Naive thymus-derived CD4-positive, alpha-beta T cell (primary cell): ENCODE measurements at regions of chr9 and their contacts with region 1.

Region 1: DNA sequence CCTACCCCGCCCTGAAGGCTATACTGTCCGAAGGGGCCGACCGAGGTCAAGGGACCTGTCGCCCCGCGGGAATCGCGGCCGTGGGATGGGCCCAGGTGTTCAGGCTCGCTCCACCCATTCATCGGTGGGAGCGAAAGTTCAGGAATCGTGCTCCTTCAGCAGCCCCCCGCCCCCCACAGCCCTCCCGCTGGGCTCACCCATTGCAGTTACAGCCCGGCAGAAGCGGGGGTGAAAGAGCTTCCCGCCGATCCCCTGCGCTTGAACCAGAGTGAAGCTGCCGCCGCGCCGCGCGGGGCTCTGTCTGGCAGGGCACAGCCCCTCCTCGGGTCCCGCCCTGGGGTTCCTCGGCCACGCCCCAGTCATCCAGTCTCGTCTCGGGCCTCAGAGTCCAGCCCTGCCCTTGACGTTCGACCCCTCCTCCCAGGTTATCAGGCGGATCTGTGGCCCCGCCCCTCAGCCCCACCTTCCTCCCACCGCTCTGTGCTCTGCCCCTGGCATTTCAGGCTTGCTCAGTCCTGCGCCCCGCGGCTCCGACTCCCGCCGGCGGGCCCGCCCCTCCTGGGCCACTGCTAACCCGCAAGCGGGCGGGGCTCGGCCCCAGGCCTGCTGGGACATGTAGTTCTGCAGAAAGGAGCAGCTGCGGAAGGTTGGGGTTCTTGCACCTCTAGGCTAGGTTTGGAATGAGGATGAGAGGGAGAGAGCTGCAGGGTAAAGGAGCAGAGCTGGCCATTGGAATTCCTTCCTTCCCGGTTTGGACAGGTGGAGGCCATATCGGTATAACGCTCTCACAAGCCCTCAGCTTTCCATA is at the start of gene MYORG:
- DNase-seq: peak; percentile 85 to 96 (median 93)
- ATAC-seq: peak; percentile 86
- H3K4me3 ChIP-seq: peak within 1 kb of the TSS; percentile 82
- H3K4me3 Mint-ChIP-seq: peak within 1 kb of the TSS; percentile 78 to 94 (median 91)
- H3K27ac ChIP-seq: peak within 1 kb of the TSS; percentile 57
- H3K27ac Mint-ChIP-seq: peak within 1 kb of the TSS; percentile 52 to 92 (median 81)
- H3K4me1 ChIP-seq: peaks cover 16 to 22% of the 10 kb centered on the region in 2 donors
- H3K4me1 Mint-ChIP-seq: peaks cover 27 to 49% (median 45%) of the 10 kb centered on the region in 7 donors
- H3K27me3 ChIP-seq: no peaks in the 10 kb centered on the region
- H3K27me3 Mint-ChIP-seq: peaks cover 0 to 5% (median 0%) of the 10 kb centered on the region in 5 donors
- total RNA-seq, gene MYORG: 0.60 to 1.9 (median 0.78) TPM

Region 2: DNA sequence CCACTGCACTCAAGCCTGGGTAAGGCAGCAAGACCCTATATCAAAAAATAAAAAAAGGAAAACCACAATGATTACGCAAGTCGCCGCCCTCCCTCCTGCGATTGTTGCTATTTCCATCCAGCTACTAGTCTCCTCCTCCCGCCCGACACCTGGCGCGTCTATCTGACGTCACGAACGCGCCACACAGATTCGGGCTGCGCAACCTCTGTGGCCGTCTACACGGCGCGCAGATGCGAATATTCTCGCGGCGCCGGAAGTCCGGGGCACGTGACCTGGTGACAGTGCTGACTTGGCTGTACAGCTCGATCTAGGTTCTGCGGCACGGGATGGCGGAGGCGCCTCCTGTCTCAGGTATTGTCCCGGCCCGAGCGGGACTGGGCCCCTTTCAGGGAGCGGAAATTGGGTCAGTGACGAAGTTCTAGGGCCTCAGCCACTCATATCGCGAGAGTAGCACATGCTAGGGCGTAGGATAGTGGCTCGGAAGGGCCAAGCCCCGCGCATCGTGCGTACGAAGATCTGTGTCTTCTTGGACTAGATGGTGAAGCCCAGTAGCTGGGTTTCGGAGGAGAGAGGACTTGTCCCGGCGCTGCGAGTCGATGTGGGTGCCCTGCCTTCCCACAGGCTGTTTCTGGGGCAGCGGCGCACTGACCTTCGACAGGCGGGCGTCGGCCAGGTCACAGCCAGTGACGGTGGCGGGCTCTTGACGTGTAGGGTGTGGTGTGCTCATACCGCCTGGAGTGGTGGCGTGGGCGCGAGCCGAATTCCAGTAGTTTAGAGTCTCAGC is 1086.4 kb before region 1 on chr9 and contains the start of gene NFX1:
- CTCF ChIA-PET with region 1: no interaction called
- POLR2A ChIA-PET with region 1: no interaction called
- intact Hi-C with region 1: loop called in 1 of 2 experiments (anchors 10 kb)
- DNase-seq: peak; percentile 94 to 100 (median 99)
- ATAC-seq: peak; percentile 89
- H3K4me3 ChIP-seq: peak within 1 kb of the TSS; percentile 76
- H3K4me3 Mint-ChIP-seq: peak within 1 kb of the TSS; percentile 83 to 99 (median 94)
- H3K27ac ChIP-seq: peak within 1 kb of the TSS; percentile 93
- H3K27ac Mint-ChIP-seq: peak within 1 kb of the TSS; percentile 96 to 100 (median 99)
- H3K4me1 ChIP-seq: peaks cover 11 to 49% of the 10 kb centered on the region in 2 donors
- H3K4me1 Mint-ChIP-seq: peaks cover 36 to 72% (median 58%) of the 10 kb centered on the region in 7 donors
- H3K27me3 ChIP-seq: no peaks in the 10 kb centered on the region
- H3K27me3 Mint-ChIP-seq: peaks cover 0 to 4% (median 0%) of the 10 kb centered on the region in 5 donors
- total RNA-seq, gene NFX1: 39.8 to 65.4 (median 43.6) TPM

Region 3: DNA sequence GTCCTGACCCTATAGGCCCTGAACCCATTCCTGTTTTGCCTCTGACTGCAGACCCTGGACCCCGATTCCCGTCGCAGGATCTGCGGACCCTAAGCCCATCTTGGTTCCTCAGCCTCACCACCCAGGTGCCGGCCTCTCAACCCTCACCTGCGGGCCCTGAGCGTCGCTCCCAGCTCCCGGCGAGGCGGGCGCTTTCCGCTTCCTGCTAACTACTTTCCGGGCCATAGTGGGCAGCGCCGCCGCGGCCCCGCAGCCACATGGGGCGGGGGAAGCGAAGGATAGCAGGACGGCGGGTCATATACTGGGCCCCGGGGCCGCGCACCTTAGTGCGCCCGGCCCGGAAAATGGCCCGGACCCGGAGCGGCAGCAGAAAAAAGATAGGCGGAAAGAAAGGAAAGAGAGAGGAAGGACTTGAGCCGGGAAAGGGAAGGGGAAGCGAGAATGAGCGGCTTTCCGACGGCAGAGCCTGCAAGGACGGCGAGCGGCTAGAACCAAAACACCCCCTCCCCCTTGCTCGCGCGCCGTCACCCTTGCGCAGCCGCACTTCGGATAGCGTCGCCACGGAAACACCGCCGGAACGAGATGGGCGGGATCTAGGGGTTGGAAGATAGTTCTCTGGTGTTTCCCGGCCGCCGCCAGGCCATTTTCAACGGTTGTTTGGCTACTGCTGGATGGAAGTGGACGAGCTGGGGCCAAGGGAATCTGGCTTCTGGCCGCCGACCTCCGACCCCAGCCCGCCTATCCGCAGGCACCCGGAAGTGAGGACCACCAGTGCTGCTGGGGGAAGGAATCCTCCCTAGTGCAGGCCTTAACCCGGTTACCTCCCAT is 250.4 kb before region 1 on chr9 and contains the start of gene DCAF12:
- CTCF ChIA-PET with region 1: no interaction called
- POLR2A ChIA-PET with region 1: no interaction called
- intact Hi-C with region 1: loop called (anchors 1 kb)
- DNase-seq: peak; percentile 84 to 92 (median 89)
- ATAC-seq: peak; percentile 96
- H3K4me3 ChIP-seq: peak within 1 kb of the TSS; percentile 92
- H3K4me3 Mint-ChIP-seq: peak within 1 kb of the TSS; percentile 92 to 99 (median 98)
- H3K27ac ChIP-seq: peak within 1 kb of the TSS; percentile 93
- H3K27ac Mint-ChIP-seq: peak within 1 kb of the TSS; percentile 94 to 99 (median 98)
- H3K4me1 ChIP-seq: peaks cover 24 to 34% of the 10 kb centered on the region in 2 donors
- H3K4me1 Mint-ChIP-seq: peaks cover 39 to 56% (median 44%) of the 10 kb centered on the region in 7 donors
- H3K27me3 ChIP-seq: no peaks in the 10 kb centered on the region
- H3K27me3 Mint-ChIP-seq: peaks cover 0 to 2% (median 0%) of the 10 kb centered on the region in 5 donors
- total RNA-seq, gene DCAF12: 10.8 to 40.4 (median 28.5) TPM

Region 4: DNA sequence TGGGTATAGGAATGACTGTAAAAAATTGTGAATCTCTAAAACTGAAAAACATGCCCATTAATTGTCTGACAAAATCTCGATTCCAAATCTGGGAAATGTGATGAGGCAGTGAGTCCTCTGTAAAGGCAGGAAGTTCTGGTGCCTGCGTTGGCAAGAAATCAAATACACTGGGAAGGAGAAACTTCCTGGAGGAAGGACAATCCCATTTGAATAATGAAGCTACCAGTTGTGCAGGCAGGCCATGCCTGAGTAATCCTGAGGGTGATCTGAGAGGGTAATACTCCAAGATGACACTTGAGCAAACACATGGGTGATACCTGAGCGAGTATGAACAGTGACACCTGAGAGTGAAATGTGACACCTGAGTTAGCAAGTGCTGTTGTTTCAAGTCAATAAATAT is 97.4 kb before region 1 on chr9:
- CTCF ChIA-PET with region 1: no interaction called
- POLR2A ChIA-PET with region 1: no interaction called
- intact Hi-C with region 1: no loop called
- DNase-seq: no peak
- ATAC-seq: no peak
- H3K4me3 ChIP-seq: no peak overlapping the region
- H3K4me3 Mint-ChIP-seq: no peak overlapping the region
- H3K27ac ChIP-seq: no peak overlapping the region
- H3K27ac Mint-ChIP-seq: no peak overlapping the region
- H3K4me1 ChIP-seq: no peaks in the 10 kb centered on the region
- H3K4me1 Mint-ChIP-seq: peaks cover 0 to 8% (median 7%) of the 10 kb centered on the region in 7 donors
- H3K27me3 ChIP-seq: no peaks in the 10 kb centered on the region
- H3K27me3 Mint-ChIP-seq: no peaks in the 10 kb centered on the region

Region 5: GRCh38 chr9:34363619-34364351 is 13.0 kb before region 1 on chr9:
- CTCF ChIA-PET with region 1: interaction called, 10 read pairs
- POLR2A ChIA-PET with region 1: interaction called, 3 read pairs
- intact Hi-C with region 1: no loop called
- DNase-seq: peak in 7 of 9 donors; percentile 23 to 65 (median 53)
- ATAC-seq: peak; percentile 85
- H3K4me3 ChIP-seq: no peak overlapping the region
- H3K4me3 Mint-ChIP-seq: peak overlapping the region; percentile 26 to 79 (median 53)
- H3K27ac ChIP-seq: peak overlapping the region; percentile 22
- H3K27ac Mint-ChIP-seq: peak overlapping the region; percentile 24 to 87 (median 73)
- H3K4me1 ChIP-seq: peaks cover 0 to 21% of the 10 kb centered on the region in 2 donors
- H3K4me1 Mint-ChIP-seq: peaks cover 14 to 29% (median 20%) of the 10 kb centered on the region in 7 donors
- H3K27me3 ChIP-seq: no peaks in the 10 kb centered on the region
- H3K27me3 Mint-ChIP-seq: no peaks in the 10 kb centered on the region

Region 6: GRCh38 chr9:34522971-34523797 is 146.4 kb after region 1 on chr9 and contains the start of gene ENHO:
- CTCF ChIA-PET with region 1: no interaction called
- POLR2A ChIA-PET with region 1: no interaction called
- intact Hi-C with region 1: loop called in 1 of 2 experiments (anchors 1 kb)
- DNase-seq: peak; percentile 77 to 97 (median 91)
- ATAC-seq: peak; percentile 97
- H3K4me3 ChIP-seq: peak within 1 kb of the TSS; percentile 66
- H3K4me3 Mint-ChIP-seq: peak within 1 kb of the TSS; percentile 70 to 83 (median 78)
- H3K27ac ChIP-seq: peak within 1 kb of the TSS; percentile 61
- H3K27ac Mint-ChIP-seq: peak within 1 kb of the TSS in 7 of 9 donors; percentile 18 to 79 (median 61)
- H3K4me1 ChIP-seq: peaks cover 7 to 10% of the 10 kb centered on the region in 2 donors
- H3K4me1 Mint-ChIP-seq: peaks cover 5 to 19% (median 10%) of the 10 kb centered on the region in 7 donors
- H3K27me3 ChIP-seq: no peaks in the 10 kb centered on the region
- H3K27me3 Mint-ChIP-seq: peaks cover 0 to 55% (median 8%) of the 10 kb centered on the region in 5 donors
- total RNA-seq, gene ENHO: 0.56 to 1.9 TPM in 2 of 5 experiments, not detected in the others

Region 7: GRCh38 chr9:34717996-34718614 is 341.3 kb after region 1 on chr9:
- CTCF ChIA-PET with region 1: no interaction called
- POLR2A ChIA-PET with region 1: no interaction called
- intact Hi-C with region 1: no loop called
- DNase-seq: no peak
- ATAC-seq: no peak
- H3K4me3 ChIP-seq: no peak overlapping the region
- H3K4me3 Mint-ChIP-seq: no peak overlapping the region
- H3K27ac ChIP-seq: no peak overlapping the region
- H3K27ac Mint-ChIP-seq: no peak overlapping the region
- H3K4me1 ChIP-seq: no peaks in the 10 kb centered on the region
- H3K4me1 Mint-ChIP-seq: no peaks in the 10 kb centered on the region
- H3K27me3 ChIP-seq: no peaks in the 10 kb centered on the region
- H3K27me3 Mint-ChIP-seq: peaks cover 0 to 15% (median 9%) of the 10 kb centered on the region in 5 donors

Region 8: GRCh38 chr9:35071814-35072460 is 695.1 kb after region 1 on chr9:
- CTCF ChIA-PET with region 1: no interaction called
- POLR2A ChIA-PET with region 1: no interaction called
- intact Hi-C with region 1: loop called in 1 of 2 experiments (anchors 1 kb)
- DNase-seq: peak in 8 of 9 donors; percentile 67 to 83 (median 71)
- ATAC-seq: peak; percentile 70
- H3K4me3 ChIP-seq: peak overlapping the region; percentile 53
- H3K4me3 Mint-ChIP-seq: peak overlapping the region; percentile 74 to 95 (median 88)
- H3K27ac ChIP-seq: peak overlapping the region; percentile 93
- H3K27ac Mint-ChIP-seq: peak overlapping the region; percentile 81 to 96 (median 91)
- H3K4me1 ChIP-seq: peaks cover 22 to 43% of the 10 kb centered on the region in 2 donors
- H3K4me1 Mint-ChIP-seq: peaks cover 34 to 66% (median 53%) of the 10 kb centered on the region in 7 donors
- H3K27me3 ChIP-seq: no peaks in the 10 kb centered on the region
- H3K27me3 Mint-ChIP-seq: peaks cover 0 to 3% (median 0%) of the 10 kb centered on the region in 5 donors

Region 9: GRCh38 chr9:36190388-36191287 is 1813.8 kb after region 1 on chr9 and contains the start of gene CLTA:
- CTCF ChIA-PET with region 1: no interaction called
- POLR2A ChIA-PET with region 1: no interaction called
- intact Hi-C with region 1: loop called in 1 of 2 experiments (anchors 5 kb)
- DNase-seq: peak; percentile 75 to 97 (median 96)
- ATAC-seq: peak; percentile 99
- H3K4me3 ChIP-seq: peak within 1 kb of the TSS; percentile 98
- H3K4me3 Mint-ChIP-seq: peak within 1 kb of the TSS; percentile 86 to 98 (median 95)
- H3K27ac ChIP-seq: peak within 1 kb of the TSS; percentile 91
- H3K27ac Mint-ChIP-seq: peak within 1 kb of the TSS; percentile 80 to 97 (median 94)
- H3K4me1 ChIP-seq: peaks cover 25 to 35% of the 10 kb centered on the region in 2 donors
- H3K4me1 Mint-ChIP-seq: peaks cover 43 to 58% (median 49%) of the 10 kb centered on the region in 7 donors
- H3K27me3 ChIP-seq: no peaks in the 10 kb centered on the region
- H3K27me3 Mint-ChIP-seq: no peaks in the 10 kb centered on the region
- total RNA-seq, gene CLTA: 32.2 to 140 (median 69.5) TPM